ENCODE measurements at regions of chr6 and their contacts with region 1.

Region 1: DNA sequence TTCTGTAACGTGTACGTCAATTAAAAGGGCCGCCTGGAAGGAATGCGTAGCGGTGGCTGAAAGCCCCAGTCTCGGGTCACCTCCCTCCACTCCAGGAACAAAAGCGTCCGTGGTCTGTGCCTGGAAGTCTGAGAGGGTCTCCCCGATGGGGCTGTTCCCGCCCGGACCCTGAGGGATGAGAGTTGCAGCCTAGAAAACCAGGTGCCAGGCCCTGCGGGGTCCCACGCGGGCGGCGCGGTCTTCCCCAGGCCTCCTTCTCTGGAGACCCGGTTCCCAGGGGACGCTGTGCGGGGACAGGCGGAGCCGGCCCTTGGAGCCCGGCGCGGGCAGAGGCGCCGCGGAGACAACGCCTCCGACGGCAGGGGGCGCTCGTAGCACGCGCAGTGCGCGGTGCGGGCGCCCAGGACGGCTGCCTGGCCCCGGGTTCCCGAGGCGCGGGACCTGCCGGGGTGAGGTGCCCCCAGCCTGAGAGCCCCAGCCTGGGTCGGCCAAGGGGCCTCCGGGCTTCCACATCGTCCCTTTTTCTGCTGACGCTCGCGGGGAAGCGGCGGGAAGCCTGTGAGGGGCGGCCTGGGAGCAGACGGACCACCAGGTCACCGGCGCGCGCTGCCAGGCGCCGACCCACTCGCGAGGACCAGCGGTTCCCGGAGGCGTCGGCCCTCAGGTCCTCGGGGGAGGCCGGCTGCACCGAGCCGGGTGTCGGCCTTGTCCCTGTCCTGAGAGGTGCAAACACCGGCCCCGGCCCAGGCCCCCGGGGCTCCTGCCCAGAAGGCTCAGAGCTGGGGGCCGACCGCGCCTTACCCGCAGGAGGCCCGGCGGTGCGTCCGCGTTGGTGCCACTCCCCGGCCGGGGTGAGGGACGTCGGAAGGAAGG is 5.3 kb upstream of the FOXC1 start:
- DNase-seq: peak; percentile 61
- H3K4me3 ChIP-seq: peak overlapping the region; percentile 48
- H3K27ac ChIP-seq: no peak overlapping the region
- H3K4me1 ChIP-seq: peaks cover 20% of the 10 kb centered on the region
- H3K27me3 ChIP-seq: peaks cover 94% of the 10 kb centered on the region
- CTCF ChIP-seq: peak; percentile 98

Region 2: DNA sequence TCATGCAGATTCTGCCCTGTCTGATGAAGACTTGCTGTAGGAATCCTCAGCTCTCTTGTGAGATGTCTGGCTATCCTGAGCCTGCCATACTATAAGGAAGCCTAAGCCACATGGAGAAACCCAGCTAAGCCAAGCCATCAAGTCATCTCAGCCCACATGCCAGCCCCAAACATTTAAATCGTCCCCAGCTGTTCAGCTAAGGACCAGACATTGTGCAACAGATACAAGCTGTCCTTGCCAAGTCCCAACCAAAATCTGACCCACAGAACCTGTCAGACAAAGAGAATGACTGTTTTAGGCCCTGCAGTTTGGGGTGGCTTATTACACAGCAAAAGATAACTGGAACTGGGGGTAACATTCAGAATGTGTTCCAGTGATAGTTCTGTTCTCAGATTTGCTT is 31.5 kb before region 1 on chr6:
- intact Hi-C with region 1: no loop called
- DNase-seq: no peak
- H3K4me3 ChIP-seq: no peak overlapping the region
- H3K27ac ChIP-seq: no peak overlapping the region
- H3K4me1 ChIP-seq: no peaks in the 10 kb centered on the region
- H3K27me3 ChIP-seq: no peaks in the 10 kb centered on the region
- CTCF ChIP-seq: no peak

Region 3: GRCh38 chr6:1739680-1740079 is 135.3 kb after region 1 on chr6:
- intact Hi-C with region 1: no loop called
- DNase-seq: no peak
- H3K4me3 ChIP-seq: no peak overlapping the region
- H3K27ac ChIP-seq: no peak overlapping the region
- H3K4me1 ChIP-seq: no peaks in the 10 kb centered on the region
- H3K27me3 ChIP-seq: no peaks in the 10 kb centered on the region
- CTCF ChIP-seq: no peak

Region 4: GRCh38 chr6:1832836-1833787 is 228.7 kb after region 1 on chr6:
- intact Hi-C with region 1: no loop called
- DNase-seq: peak; percentile 71
- H3K4me3 ChIP-seq: no peak overlapping the region
- H3K27ac ChIP-seq: no peak overlapping the region
- H3K4me1 ChIP-seq: no peaks in the 10 kb centered on the region
- H3K27me3 ChIP-seq: no peaks in the 10 kb centered on the region
- CTCF ChIP-seq: no peak

Region 5: GRCh38 chr6:2108700-2109306 is 504.4 kb after region 1 on chr6:
- intact Hi-C with region 1: loop called (anchors 5 kb)
- DNase-seq: no peak
- H3K4me3 ChIP-seq: no peak overlapping the region
- H3K27ac ChIP-seq: no peak overlapping the region
- H3K4me1 ChIP-seq: no peaks in the 10 kb centered on the region
- H3K27me3 ChIP-seq: no peaks in the 10 kb centered on the region
- CTCF ChIP-seq: no peak

Region 6: GRCh38 chr6:2196079-2196679 is 591.8 kb after region 1 on chr6:
- intact Hi-C with region 1: loop called (anchors 5 kb)
- DNase-seq: peak; percentile 46
- H3K4me3 ChIP-seq: no peak overlapping the region
- H3K27ac ChIP-seq: no peak overlapping the region
- H3K4me1 ChIP-seq: no peaks in the 10 kb centered on the region
- H3K27me3 ChIP-seq: no peaks in the 10 kb centered on the region
- CTCF ChIP-seq: peak; percentile 69

Measured in colonic mucosa (tissue), 4 donors.